Psoas muscle (tissue), 8 donors: ENCODE measurements at regions of chr11 and their contacts with region 1.

Region 1: GRCh38 chr11:45332276-45332934 is 46.3 kb upstream of the SYT13 start:
- DNase-seq: no peak
- ATAC-seq: peak in 3 of 4 donors; percentile 71 to 86 (median 71)
- H3K4me3 ChIP-seq: peak overlapping the region; percentile 39
- H3K27ac ChIP-seq: peak overlapping the region; percentile 21
- H3K4me1 ChIP-seq: peaks cover 9% of the 10 kb centered on the region
- H3K27me3 ChIP-seq: peaks cover 0 to 5% (median 4%) of the 10 kb centered on the region in 3 donors
- CTCF ChIP-seq: peak; percentile 84

Region 2: GRCh38 chr11:44936525-44936924 is 395.9 kb before region 1 on chr11:
- intact Hi-C with region 1: loop called (anchors 5 to 10 kb)
- DNase-seq: peak; percentile 79 to 82
- ATAC-seq: peak; percentile 80 to 88 (median 86)
- H3K4me3 ChIP-seq: no peak overlapping the region
- H3K27ac ChIP-seq: no peak overlapping the region
- H3K4me1 ChIP-seq: peaks cover 10% of the 10 kb centered on the region
- H3K27me3 ChIP-seq: no peaks in the 10 kb centered on the region
- CTCF ChIP-seq: peak; percentile 97

Region 3: GRCh38 chr11:45110562-45110961 is 221.8 kb before region 1 on chr11:
- intact Hi-C with region 1: loop called (anchors 1 to 2 kb)
- DNase-seq: peak in 1 of 2 donors; percentile 45
- ATAC-seq: peak; percentile 80 to 87 (median 84)
- H3K4me3 ChIP-seq: no peak overlapping the region
- H3K27ac ChIP-seq: no peak overlapping the region
- H3K4me1 ChIP-seq: no peaks in the 10 kb centered on the region
- H3K27me3 ChIP-seq: peaks cover 0 to 7% (median 0%) of the 10 kb centered on the region in 3 donors
- CTCF ChIP-seq: peak; percentile 86

Region 4: GRCh38 chr11:45254070-45254469 is 78.3 kb before region 1 on chr11:
- intact Hi-C with region 1: loop called in 1 of 2 experiments (anchors 2 kb)
- DNase-seq: no peak
- ATAC-seq: no peak
- H3K4me3 ChIP-seq: no peak overlapping the region
- H3K27ac ChIP-seq: no peak overlapping the region
- H3K4me1 ChIP-seq: no peaks in the 10 kb centered on the region
- H3K27me3 ChIP-seq: peaks cover 0 to 2% (median 2%) of the 10 kb centered on the region in 3 donors
- CTCF ChIP-seq: no peak

Region 5: GRCh38 chr11:45294499-45294898 is 37.9 kb before region 1 on chr11:
- intact Hi-C with region 1: loop called in 1 of 2 experiments (anchors 2 kb)
- DNase-seq: no peak
- ATAC-seq: no peak
- H3K4me3 ChIP-seq: no peak overlapping the region
- H3K27ac ChIP-seq: no peak overlapping the region
- H3K4me1 ChIP-seq: no peaks in the 10 kb centered on the region
- H3K27me3 ChIP-seq: peaks cover 0 to 26% (median under 1%) of the 10 kb centered on the region in 3 donors
- CTCF ChIP-seq: no peak

Region 6: DNA sequence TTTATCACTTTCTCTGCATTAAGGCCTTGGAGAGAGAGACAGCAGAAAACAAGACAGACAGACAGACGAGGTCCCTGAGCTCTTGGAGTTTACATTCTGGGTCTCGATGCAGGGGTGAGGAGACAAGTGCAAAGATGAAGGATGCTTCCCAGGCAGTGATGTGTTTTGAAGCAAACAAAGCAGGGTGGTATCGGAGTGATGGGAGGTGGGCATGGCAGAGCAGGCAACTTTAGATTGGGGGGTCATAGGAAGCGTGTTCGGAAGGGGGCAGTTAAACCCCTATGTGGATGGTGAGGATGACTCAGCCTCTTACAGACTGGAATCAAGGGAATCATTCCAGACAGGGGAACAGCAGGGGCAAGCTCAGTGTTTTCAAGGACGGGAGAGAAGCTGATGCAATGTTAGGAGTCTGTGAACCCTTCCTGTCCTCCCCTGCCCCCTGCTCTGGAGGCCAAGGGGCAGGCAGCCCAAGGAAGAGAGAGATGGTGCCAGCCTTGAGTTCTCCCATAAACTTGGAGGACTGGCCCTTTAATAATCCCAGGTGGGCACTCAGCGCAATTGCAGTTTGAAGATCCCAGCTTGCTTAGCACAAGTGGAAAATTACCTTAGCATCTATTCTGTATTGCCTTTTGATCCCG is 152.8 kb after region 1 on chr11:
- intact Hi-C with region 1: no loop called
- DNase-seq: no peak
- ATAC-seq: no peak
- H3K4me3 ChIP-seq: no peak overlapping the region
- H3K27ac ChIP-seq: no peak overlapping the region
- H3K4me1 ChIP-seq: no peaks in the 10 kb centered on the region
- H3K27me3 ChIP-seq: peaks cover 0 to 36% (median 6%) of the 10 kb centered on the region in 3 donors
- CTCF ChIP-seq: no peak